ENCODE measurements at regions of chr14 and their contacts with region 1.

Region 1: DNA sequence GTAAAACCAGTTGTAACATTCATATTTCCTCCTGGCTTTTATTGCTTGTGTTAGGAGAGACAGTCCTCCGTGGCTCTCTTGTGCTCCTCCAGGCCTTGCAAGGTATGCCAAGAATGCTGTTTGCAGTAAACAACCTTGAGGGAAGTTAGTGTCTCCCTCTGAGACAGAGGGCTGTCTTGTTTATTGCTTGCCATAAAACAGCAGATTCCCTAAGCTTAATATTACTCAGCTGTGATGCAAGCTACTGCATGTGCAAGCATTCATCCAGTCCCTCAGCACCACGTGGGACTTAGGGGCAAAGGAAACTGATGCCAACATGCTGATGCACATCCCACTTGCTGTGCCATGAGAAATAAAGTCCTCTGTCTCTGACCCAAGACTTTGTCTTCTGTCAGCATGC is 6.6 kb downstream of the POMT2 start:
- DNase-seq: no peak
- ATAC-seq: peak; percentile 53 to 66 (median 62)
- H3K4me3 ChIP-seq: peak overlapping the region; percentile 1
- H3K27ac ChIP-seq: peak overlapping the region; percentile 85
- H3K4me1 ChIP-seq: peaks cover 81% of the 10 kb centered on the region
- H3K27me3 ChIP-seq: no peaks in the 10 kb centered on the region
- CTCF ChIP-seq: no peak

Region 2: DNA sequence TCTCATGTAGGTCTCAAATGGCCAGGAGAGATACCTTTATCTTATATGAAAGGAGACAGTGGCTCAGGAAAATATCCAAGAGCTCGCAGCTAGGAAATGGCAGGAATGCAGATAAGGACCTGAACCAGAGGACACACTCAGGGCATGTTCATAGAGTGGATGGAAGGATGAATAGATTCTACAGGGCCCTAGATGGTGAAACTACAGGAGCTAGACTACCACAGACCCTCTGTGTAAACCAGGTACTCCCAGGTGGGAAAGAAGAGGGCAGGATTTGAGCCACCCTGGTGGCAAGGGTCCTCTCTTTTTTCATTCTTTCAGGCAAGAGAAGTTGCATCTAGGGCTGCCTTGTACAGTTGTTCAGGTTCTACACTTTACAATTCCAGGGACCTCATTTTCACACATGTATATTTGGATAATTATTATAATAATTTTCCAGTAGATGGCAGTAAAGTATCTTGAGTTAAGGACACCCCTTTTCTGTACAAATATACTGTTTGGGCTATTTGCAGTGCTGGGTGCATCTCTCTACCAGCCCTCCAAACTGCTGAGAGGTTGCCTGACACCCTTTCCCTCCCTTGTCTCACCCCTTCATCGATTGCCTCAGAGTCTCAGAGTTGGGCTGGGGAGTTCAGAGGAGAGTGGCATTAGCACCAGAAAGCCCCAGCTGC is 162.0 kb before region 1 on chr14:
- intact Hi-C with region 1: loop called (anchors 10 kb)
- DNase-seq: no peak
- ATAC-seq: no peak
- H3K4me3 ChIP-seq: no peak overlapping the region
- H3K27ac ChIP-seq: no peak overlapping the region
- H3K4me1 ChIP-seq: no peaks in the 10 kb centered on the region
- H3K27me3 ChIP-seq: peaks cover 0 to 17% (median 5%) of the 10 kb centered on the region in 3 donors
- CTCF ChIP-seq: peak; percentile 21

Region 3: DNA sequence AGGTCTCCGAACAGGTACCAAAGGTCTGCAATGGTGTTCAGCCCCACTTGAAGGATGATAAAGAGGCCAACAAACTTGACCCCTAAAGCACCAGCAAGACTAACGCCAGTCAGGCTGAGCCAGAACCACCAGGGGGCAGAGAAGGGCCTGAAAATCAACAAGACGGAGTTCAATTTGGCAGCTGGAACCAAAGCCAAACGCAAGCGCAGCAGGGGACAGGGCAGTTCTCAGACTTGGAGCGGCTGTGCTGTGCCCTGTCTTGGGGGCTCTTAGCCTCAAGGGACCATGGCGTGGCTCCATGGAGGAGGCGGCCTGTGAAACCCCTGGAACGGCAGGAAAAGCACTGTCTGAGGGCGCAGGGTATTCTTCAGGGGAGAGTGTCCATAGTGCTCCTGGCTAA is 12.9 kb before region 1 on chr14:
- intact Hi-C with region 1: loop called (anchors 1 kb)
- DNase-seq: peak; percentile 83 to 92
- ATAC-seq: peak; percentile 75 to 83 (median 76)
- H3K4me3 ChIP-seq: peak overlapping the region; percentile 20
- H3K27ac ChIP-seq: peak overlapping the region; percentile 38
- H3K4me1 ChIP-seq: peaks cover 47% of the 10 kb centered on the region
- H3K27me3 ChIP-seq: no peaks in the 10 kb centered on the region
- CTCF ChIP-seq: peak; percentile 75

Measured in psoas muscle (tissue), 8 donors.